ENCODE measurements at regions of chr6 and their contacts with region 1.

Region 1: GRCh38 chr6:113879186-113880096 is 22.3 kb downstream of the MARCKS start:
- DNase-seq: peak; percentile 60 to 68
- H3K4me3 ChIP-seq: no peak overlapping the region
- H3K4me3 Mint-ChIP-seq: no peak overlapping the region
- H3K27ac Mint-ChIP-seq: no peak overlapping the region
- H3K4me1 ChIP-seq: peaks cover 18% of the 10 kb centered on the region
- H3K4me1 Mint-ChIP-seq: peaks cover 8% of the 10 kb centered on the region
- H3K27me3 ChIP-seq: no peaks in the 10 kb centered on the region
- H3K27me3 Mint-ChIP-seq: no peaks in the 10 kb centered on the region
- CTCF ChIP-seq: peak; percentile 78 to 81

Region 2: DNA sequence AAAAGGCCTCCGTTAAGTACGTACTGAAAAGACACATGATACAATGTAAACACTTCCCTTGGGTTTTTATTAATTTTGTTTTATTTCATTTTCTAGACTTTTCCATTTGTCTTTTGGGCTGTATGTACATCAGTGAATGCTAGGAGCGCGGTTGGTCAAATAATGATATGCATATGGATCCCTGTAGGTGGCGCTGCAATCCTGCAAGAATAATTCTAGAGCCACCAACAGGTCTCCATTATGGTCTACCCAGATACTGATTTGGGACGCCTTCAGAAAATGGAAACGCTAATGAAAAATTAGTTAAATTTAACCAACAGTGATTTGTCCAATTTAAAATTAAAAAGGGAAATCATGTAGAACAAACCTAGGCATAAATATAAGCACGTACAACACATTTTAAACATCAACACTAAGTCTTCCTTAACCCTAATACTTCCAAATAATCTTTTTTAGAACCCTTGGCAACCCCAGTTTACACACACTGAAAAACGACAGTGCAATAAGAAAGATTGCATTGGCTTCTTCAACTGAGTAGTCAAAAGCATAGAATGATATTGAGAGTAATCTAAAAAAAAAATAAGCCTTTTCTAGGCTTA is 1098.8 kb before region 1 on chr6:
- CTCF ChIA-PET with region 1: no interaction called
- POLR2A ChIA-PET with region 1: no interaction called
- intact Hi-C with region 1: loop called (anchors 1 kb)
- DNase-seq: peak; percentile 62 to 74
- H3K4me3 ChIP-seq: no peak overlapping the region
- H3K4me3 Mint-ChIP-seq: no peak overlapping the region
- H3K27ac Mint-ChIP-seq: no peak overlapping the region
- H3K4me1 ChIP-seq: no peaks in the 10 kb centered on the region
- H3K4me1 Mint-ChIP-seq: no peaks in the 10 kb centered on the region
- H3K27me3 ChIP-seq: no peaks in the 10 kb centered on the region
- H3K27me3 Mint-ChIP-seq: peaks cover 5% of the 10 kb centered on the region
- CTCF ChIP-seq: peak; percentile 74 to 84

Region 3: GRCh38 chr6:112879920-112880413 is 999.5 kb before region 1 on chr6:
- CTCF ChIA-PET with region 1: interaction called, 14 read pairs
- POLR2A ChIA-PET with region 1: no interaction called
- intact Hi-C with region 1: loop called (anchors 1 kb)
- DNase-seq: peak; percentile 76 to 80
- H3K4me3 ChIP-seq: peak overlapping the region; percentile 56
- H3K4me3 Mint-ChIP-seq: peak overlapping the region; percentile 64
- H3K27ac Mint-ChIP-seq: no peak overlapping the region
- H3K4me1 ChIP-seq: peaks cover 5% of the 10 kb centered on the region; the same call in 1 of the 2 replicates
- H3K4me1 Mint-ChIP-seq: no peaks in the 10 kb centered on the region
- H3K27me3 ChIP-seq: no peaks in the 10 kb centered on the region
- H3K27me3 Mint-ChIP-seq: no peaks in the 10 kb centered on the region
- CTCF ChIP-seq: peak; percentile 55 to 69

Region 4: DNA sequence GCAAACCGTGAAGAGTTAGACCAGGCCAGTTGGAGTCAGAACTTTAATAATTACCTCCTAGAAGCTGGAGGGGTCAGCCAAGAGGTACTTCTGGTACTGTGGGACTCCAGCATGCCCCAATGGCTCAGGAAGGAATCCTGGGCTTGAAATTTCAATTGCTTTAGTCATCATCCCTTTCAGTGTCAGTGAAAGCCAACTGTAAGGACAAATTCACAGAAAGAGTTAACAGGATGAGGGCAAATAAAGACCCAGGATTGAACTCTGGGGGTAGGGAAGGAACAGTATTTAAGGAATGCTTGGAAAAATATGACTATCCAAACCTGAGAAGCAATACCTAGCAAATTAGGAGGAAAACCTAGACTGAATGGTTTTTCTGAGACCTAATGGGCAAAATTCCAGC is 757.4 kb before region 1 on chr6:
- CTCF ChIA-PET with region 1: no interaction called
- POLR2A ChIA-PET with region 1: no interaction called
- intact Hi-C with region 1: loop called (anchors 1 kb)
- DNase-seq: peak; percentile 33 to 38
- H3K4me3 ChIP-seq: no peak overlapping the region
- H3K4me3 Mint-ChIP-seq: no peak overlapping the region
- H3K27ac Mint-ChIP-seq: no peak overlapping the region
- H3K4me1 ChIP-seq: 0 out of 2 replicates have a peak, but pooled peaks cover 6% of the 10 kb centered on the region
- H3K4me1 Mint-ChIP-seq: peaks cover 10% of the 10 kb centered on the region
- H3K27me3 ChIP-seq: no peaks in the 10 kb centered on the region
- H3K27me3 Mint-ChIP-seq: no peaks in the 10 kb centered on the region
- CTCF ChIP-seq: peak in 1 of 2 experiments; percentile 23

Region 5: DNA sequence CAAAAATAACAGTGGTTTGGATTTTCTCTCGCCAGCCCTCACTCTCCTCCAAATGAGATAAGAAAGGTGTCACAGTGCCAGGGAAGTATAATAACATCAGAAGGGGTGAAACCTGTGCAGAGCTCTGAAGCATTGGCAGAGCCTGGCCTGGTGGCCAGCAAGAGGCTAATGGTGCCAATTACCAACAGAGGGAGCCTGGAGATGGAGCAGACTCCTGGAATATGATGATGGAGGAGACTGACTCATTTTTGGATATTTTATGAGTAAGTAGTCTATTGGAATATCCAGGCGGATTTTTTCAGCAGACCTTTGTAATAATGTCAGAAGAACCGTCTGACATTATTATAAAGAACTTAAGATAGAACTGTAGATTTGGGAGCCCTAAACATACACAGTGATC is 464.9 kb before region 1 on chr6:
- CTCF ChIA-PET with region 1: no interaction called
- POLR2A ChIA-PET with region 1: no interaction called
- intact Hi-C with region 1: loop called (anchors 1 kb)
- DNase-seq: peak; percentile 39 to 45
- H3K4me3 ChIP-seq: no peak overlapping the region
- H3K4me3 Mint-ChIP-seq: no peak overlapping the region
- H3K27ac Mint-ChIP-seq: no peak overlapping the region
- H3K4me1 ChIP-seq: peaks cover 8% of the 10 kb centered on the region; the same call in 1 of the 2 replicates
- H3K4me1 Mint-ChIP-seq: peaks cover 13% of the 10 kb centered on the region
- H3K27me3 ChIP-seq: no peaks in the 10 kb centered on the region
- H3K27me3 Mint-ChIP-seq: no peaks in the 10 kb centered on the region
- CTCF ChIP-seq: peak in 1 of 2 experiments; percentile 50

Region 6: GRCh38 chr6:113596387-113597230 is 282.8 kb before region 1 on chr6:
- CTCF ChIA-PET with region 1: interaction called, 4 read pairs
- POLR2A ChIA-PET with region 1: no interaction called
- intact Hi-C with region 1: loop called (anchors 1 kb)
- DNase-seq: no peak
- H3K4me3 ChIP-seq: no peak overlapping the region
- H3K4me3 Mint-ChIP-seq: no peak overlapping the region
- H3K27ac Mint-ChIP-seq: no peak overlapping the region
- H3K4me1 ChIP-seq: peaks cover 11% of the 10 kb centered on the region; the same call in 1 of the 2 replicates
- H3K4me1 Mint-ChIP-seq: peaks cover 22% of the 10 kb centered on the region
- H3K27me3 ChIP-seq: no peaks in the 10 kb centered on the region
- H3K27me3 Mint-ChIP-seq: no peaks in the 10 kb centered on the region
- CTCF ChIP-seq: no peak

Region 7: GRCh38 chr6:113909234-113909856 is 29.9 kb after region 1 on chr6:
- CTCF ChIA-PET with region 1: interaction called, 12 read pairs
- POLR2A ChIA-PET with region 1: no interaction called
- intact Hi-C with region 1: no loop called
- DNase-seq: peak in 1 of 2 experiments; percentile 57
- H3K4me3 ChIP-seq: no peak overlapping the region
- H3K4me3 Mint-ChIP-seq: no peak overlapping the region
- H3K27ac Mint-ChIP-seq: no peak overlapping the region
- H3K4me1 ChIP-seq: peaks cover 5% of the 10 kb centered on the region; the same call in 1 of the 2 replicates
- H3K4me1 Mint-ChIP-seq: peaks cover 8% of the 10 kb centered on the region
- H3K27me3 ChIP-seq: no peaks in the 10 kb centered on the region
- H3K27me3 Mint-ChIP-seq: no peaks in the 10 kb centered on the region
- CTCF ChIP-seq: peak; percentile 38 to 73